ENCODE measurements at regions of chr21 and their contacts with region 1.

Region 1: GRCh38 chr21:41678944-41679343 is 87.9 kb downstream of the RIPK4 start:
- DNase-seq: peak; percentile 97
- ATAC-seq: peak; percentile 99

Region 2: DNA sequence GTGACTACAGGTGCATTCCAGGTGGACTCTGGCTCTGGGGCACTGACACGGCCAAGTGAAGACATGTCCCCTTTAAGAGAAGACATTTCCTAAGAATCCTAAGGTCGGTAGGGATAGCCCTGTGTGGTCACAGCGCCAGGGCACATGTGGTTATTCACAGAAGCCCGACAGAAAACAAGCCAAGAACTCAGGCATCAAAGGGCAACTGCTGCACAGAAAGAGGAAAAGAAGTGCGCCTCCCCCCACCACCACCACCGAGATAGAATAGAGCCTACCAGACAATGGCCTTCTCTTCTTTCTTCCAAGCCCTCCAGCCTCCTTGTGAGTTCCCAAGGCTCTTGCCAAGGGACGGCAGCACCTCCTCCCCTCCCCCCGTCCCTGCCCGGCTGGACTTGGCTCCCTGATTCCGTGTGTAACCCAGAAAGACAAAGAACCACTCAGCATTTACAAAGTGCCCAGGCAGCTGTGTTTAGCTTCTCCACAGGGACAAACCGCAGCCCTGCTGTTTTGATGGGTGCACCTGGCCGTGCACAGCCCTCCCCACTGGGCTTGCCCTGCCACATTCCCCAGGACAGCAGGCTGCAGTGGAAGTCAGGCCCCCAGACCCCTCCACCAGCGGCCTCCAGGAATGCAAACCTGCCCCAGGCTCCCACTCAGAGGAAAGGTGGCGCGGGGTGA is 201.2 kb before region 1 on chr21:
- intact Hi-C with region 1: no loop called
- DNase-seq: no peak
- ATAC-seq: no peak

Region 3: GRCh38 chr21:41768437-41769061 is 89.6 kb after region 1 on chr21:
- intact Hi-C with region 1: loop called in 1 of 2 experiments (anchors 10 kb)
- DNase-seq: no peak
- ATAC-seq: peak; percentile 22 to 40